ENCODE measurements at regions of chr10 and their contacts with region 1.

Region 1: GRCh38 chr10:70221030-70221429 is 12.2 kb downstream of the PPA1 start:
- DNase-seq: no peak
- H3K4me3 ChIP-seq: no peak overlapping the region
- H3K4me3 Mint-ChIP-seq: no peak overlapping the region
- H3K27ac Mint-ChIP-seq: peak overlapping the region; percentile 19
- H3K4me1 ChIP-seq: peaks cover 12% of the 10 kb centered on the region; the same call in 1 of the 2 replicates
- H3K4me1 Mint-ChIP-seq: peaks cover 14% of the 10 kb centered on the region
- H3K27me3 ChIP-seq: no peaks in the 10 kb centered on the region
- H3K27me3 Mint-ChIP-seq: no peaks in the 10 kb centered on the region
- CTCF ChIP-seq: no peak

Region 2: DNA sequence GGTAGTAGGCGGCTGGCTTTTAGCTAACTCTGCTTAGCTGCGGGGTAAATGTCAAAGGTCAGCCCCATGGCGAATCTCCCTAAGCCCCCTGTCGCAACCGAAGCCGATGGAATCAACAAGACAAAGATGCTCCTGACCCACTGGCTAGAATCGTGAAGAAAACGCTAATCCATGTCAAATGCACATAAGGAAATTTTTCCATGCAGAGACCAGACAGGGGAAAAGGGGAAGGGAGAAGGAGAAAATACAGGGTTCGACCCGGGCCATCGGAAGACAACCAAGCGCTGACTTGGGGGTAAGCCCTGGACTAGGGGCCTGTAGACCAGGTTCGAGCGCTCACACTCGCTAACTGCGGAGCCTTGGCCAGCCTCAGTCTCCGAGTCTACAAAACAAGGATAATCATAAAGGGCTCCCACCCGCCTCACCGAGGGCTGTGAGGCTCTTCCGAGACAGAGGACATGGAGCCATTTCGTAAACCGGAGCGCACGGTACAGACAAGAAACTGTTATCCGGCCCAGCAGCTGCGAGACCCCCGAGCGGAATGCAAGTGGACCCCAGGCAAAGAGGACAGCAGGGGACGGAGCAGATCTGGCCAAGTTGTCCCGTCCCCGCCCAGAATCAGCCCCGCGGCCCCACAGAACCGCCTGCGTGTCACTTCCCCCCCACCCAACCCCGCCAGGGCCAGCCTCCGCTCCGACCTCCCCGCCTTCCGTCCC is 51.2 kb before region 1 on chr10:
- CTCF ChIA-PET with region 1: interaction called, 8 read pairs
- POLR2A ChIA-PET with region 1: interaction called, 10 read pairs
- intact Hi-C with region 1: no loop called
- DNase-seq: peak in 1 of 2 experiments; percentile 33
- H3K4me3 ChIP-seq: peak overlapping the region; percentile 66
- H3K4me3 Mint-ChIP-seq: peak overlapping the region; percentile 96
- H3K27ac Mint-ChIP-seq: peak overlapping the region; percentile 98
- H3K4me1 ChIP-seq: peaks cover 5% of the 10 kb centered on the region
- H3K4me1 Mint-ChIP-seq: peaks cover 24% of the 10 kb centered on the region
- H3K27me3 ChIP-seq: no peaks in the 10 kb centered on the region
- H3K27me3 Mint-ChIP-seq: no peaks in the 10 kb centered on the region
- CTCF ChIP-seq: no peak

Region 3: DNA sequence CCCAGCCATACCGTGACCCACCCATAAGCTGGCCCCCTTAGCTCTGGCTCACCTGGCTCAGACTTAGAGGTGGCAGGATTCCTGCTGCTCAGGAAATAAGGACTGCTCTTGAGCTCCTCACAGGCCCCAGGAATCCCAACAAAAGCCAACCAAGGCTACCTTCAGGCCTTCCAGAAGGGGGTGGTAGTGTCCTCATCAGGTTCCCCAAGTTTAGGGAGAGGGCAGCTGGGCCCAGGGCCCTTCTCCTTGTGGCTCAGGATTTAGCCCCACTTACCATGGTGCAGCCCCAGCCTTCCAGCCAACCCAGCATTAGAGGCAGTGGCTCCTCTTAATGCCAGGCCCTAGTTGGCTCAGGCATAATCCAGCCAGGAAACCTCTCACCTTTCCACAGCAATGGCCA is 39.2 kb after region 1 on chr10:
- CTCF ChIA-PET with region 1: interaction called, 167 read pairs
- POLR2A ChIA-PET with region 1: interaction called, 10 read pairs
- intact Hi-C with region 1: loop called (anchors 1 kb)
- DNase-seq: peak in 1 of 2 experiments; percentile 31
- H3K4me3 ChIP-seq: no peak overlapping the region
- H3K4me3 Mint-ChIP-seq: no peak overlapping the region
- H3K27ac Mint-ChIP-seq: no peak overlapping the region
- H3K4me1 ChIP-seq: peaks cover 24% of the 10 kb centered on the region
- H3K4me1 Mint-ChIP-seq: peaks cover 16% of the 10 kb centered on the region
- H3K27me3 ChIP-seq: no peaks in the 10 kb centered on the region
- H3K27me3 Mint-ChIP-seq: no peaks in the 10 kb centered on the region
- CTCF ChIP-seq: no peak

Region 4: GRCh38 chr10:70331486-70332268 is 110.6 kb after region 1 on chr10:
- CTCF ChIA-PET with region 1: interaction called, 8 read pairs
- POLR2A ChIA-PET with region 1: interaction called, 3 read pairs
- intact Hi-C with region 1: loop called (anchors 1 kb)
- DNase-seq: peak in 1 of 2 experiments; percentile 30
- H3K4me3 ChIP-seq: no peak overlapping the region
- H3K4me3 Mint-ChIP-seq: no peak overlapping the region
- H3K27ac Mint-ChIP-seq: no peak overlapping the region
- H3K4me1 ChIP-seq: no peaks in the 10 kb centered on the region
- H3K4me1 Mint-ChIP-seq: peaks cover under 1% of the 10 kb centered on the region
- H3K27me3 ChIP-seq: no peaks in the 10 kb centered on the region
- H3K27me3 Mint-ChIP-seq: no peaks in the 10 kb centered on the region
- CTCF ChIP-seq: peak; percentile 32 to 38

Region 5: DNA sequence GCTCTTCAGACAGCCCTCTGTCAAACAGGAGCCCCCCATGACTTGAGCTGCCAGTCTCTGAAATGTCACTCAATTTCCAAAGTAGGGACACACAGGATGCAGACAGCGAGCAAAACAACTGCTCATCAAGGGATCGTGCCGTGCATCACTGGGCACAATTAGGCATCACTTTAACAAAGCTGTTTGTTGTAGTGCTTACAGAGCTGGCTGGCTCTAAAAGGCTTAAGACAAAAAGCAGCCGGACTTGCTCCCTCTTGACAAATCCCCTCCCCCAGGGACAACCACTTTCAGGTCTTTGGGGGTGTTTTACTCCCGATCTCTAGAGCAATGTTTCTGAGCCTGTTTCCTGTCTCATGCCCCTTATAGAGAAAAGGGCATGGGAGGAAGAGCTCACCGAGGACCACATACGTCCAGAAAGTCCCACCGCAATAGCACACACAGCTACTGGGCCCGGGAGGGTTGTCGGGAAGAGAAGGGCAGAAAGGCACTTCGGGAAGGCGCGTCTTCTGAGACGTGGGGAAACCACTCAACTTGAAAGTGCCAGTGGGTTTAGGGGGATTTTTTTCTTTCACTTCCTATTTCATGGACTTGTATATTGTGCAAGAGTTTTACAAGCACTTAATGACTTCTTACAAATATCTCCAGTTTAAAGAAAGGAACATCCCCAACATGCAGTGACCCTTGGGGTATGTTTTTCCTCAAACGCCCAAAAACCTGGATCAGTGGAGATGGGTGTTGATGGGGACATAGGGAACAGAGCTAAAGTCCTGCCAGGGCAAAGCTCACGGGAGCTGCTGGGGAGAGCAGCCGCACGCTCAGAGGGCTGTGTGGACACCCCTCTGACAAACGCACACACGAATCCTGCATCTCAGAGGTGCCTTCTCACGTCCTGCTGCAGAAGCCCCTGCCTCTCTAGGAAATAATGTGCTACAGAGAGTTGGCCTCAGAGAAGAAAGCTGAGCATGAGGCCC is 134.3 kb after region 1 on chr10:
- CTCF ChIA-PET with region 1: interaction called, 28 read pairs
- POLR2A ChIA-PET with region 1: no interaction called
- intact Hi-C with region 1: no loop called
- DNase-seq: no peak
- H3K4me3 ChIP-seq: no peak overlapping the region
- H3K4me3 Mint-ChIP-seq: no peak overlapping the region
- H3K27ac Mint-ChIP-seq: no peak overlapping the region
- H3K4me1 ChIP-seq: peaks cover 60% of the 10 kb centered on the region
- H3K4me1 Mint-ChIP-seq: peaks cover 47% of the 10 kb centered on the region
- H3K27me3 ChIP-seq: no peaks in the 10 kb centered on the region
- H3K27me3 Mint-ChIP-seq: no peaks in the 10 kb centered on the region
- CTCF ChIP-seq: no peak

Region 6: DNA sequence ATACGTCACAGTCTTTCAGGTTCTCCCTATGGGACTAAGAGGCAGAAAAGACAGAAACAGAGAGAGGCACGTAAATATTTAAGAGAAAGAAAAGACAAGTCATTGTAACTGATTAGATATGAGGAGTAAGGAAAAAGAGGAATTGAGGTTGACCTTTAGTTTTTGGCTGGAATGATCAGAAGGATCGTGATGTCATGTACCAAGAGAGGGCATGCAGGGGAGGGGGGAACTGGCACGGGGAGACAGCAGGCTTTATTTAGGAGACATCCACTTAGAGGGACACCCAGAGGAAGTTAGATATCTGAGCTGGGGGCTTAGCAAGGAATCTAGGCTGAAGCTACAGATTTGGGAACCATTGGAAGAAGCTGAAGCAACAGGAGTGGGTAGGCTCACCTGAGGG is 170.6 kb after region 1 on chr10:
- CTCF ChIA-PET with region 1: interaction called, 131 read pairs
- POLR2A ChIA-PET with region 1: interaction called, 6 read pairs
- intact Hi-C with region 1: loop called (anchors 1 kb)
- DNase-seq: no peak
- H3K4me3 ChIP-seq: no peak overlapping the region
- H3K4me3 Mint-ChIP-seq: no peak overlapping the region
- H3K27ac Mint-ChIP-seq: no peak overlapping the region
- H3K4me1 ChIP-seq: peaks cover 4% of the 10 kb centered on the region; the same call in 1 of the 2 replicates
- H3K4me1 Mint-ChIP-seq: peaks cover 24% of the 10 kb centered on the region
- H3K27me3 ChIP-seq: no peaks in the 10 kb centered on the region
- H3K27me3 Mint-ChIP-seq: no peaks in the 10 kb centered on the region
- CTCF ChIP-seq: no peak

Measured in Caco-2 (cell line).